ENCODE measurements at regions of chr20 and their contacts with region 1.

Region 1: DNA sequence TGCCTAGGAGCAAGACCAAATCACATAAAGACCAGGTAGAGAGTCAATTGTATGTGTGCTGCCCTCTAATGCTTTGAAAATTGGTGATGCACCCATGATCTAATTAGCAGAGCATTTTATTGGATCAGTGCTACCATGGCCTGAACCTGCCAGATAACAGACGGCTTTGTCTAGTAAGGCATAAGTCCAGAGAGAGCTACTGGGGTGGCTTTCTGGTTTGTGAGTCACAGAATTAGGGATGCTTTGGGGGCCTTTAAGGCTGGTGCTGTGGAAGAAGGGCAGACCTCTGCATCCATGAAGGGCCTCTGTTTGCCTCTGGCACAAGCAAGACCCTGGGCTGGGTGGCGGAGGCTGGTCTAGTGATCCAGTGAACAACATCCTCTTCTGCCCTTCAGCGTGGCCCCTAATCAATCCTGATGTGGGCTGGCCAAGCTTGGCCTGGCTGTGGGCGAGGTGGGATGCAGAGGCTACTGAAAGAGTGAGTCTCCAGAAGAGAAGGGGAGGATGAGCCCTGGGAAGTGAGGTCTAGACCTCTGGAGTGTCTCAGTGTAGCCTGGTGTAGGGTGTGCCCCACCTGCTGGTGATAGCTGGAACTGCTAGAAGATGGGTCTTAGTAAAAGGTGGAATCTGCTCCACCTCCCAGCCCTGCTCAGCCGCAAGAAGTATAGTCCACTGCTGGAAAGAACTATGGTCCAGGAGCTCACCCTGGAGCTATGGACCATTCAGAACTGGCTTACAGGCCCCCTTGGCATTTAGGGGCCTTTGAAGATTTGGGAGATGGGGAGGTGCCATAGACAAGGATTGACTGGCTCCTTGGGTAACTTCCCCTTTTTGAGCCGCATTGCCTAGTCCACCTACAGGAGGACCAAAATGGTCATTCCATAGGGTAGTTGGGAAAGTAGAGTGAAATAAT is 36.7 kb upstream of the AAR2 start:
- DNase-seq: peak; percentile 50 to 62 (median 58)
- H3K4me3 ChIP-seq: no peak overlapping the region
- H3K4me3 Mint-ChIP-seq: no peak overlapping the region
- H3K27ac ChIP-seq: no peak overlapping the region
- H3K27ac Mint-ChIP-seq: no peak overlapping the region
- H3K4me1 ChIP-seq: peaks cover 3% of the 10 kb centered on the region
- H3K4me1 Mint-ChIP-seq: peaks cover 3 to 6% (median 4%) of the 10 kb centered on the region in 4 donors
- H3K27me3 ChIP-seq: no peaks in the 10 kb centered on the region
- H3K27me3 Mint-ChIP-seq: peaks cover 6 to 16% of the 10 kb centered on the region in 2 donors

Region 2: GRCh38 chr20:36155991-36156390 is 43.6 kb before region 1 on chr20:
- CTCF ChIA-PET with region 1: interaction called, 16 read pairs
- POLR2A ChIA-PET with region 1: no interaction called
- intact Hi-C with region 1: loop called (anchors 1 kb)
- DNase-seq: no peak
- H3K4me3 ChIP-seq: no peak overlapping the region
- H3K4me3 Mint-ChIP-seq: peak overlapping the region in 1 of 8 donors; percentile 47
- H3K27ac ChIP-seq: no peak overlapping the region
- H3K27ac Mint-ChIP-seq: no peak overlapping the region
- H3K4me1 ChIP-seq: peaks cover 6% of the 10 kb centered on the region
- H3K4me1 Mint-ChIP-seq: peaks cover 0 to 4% (median 2%) of the 10 kb centered on the region in 4 donors
- H3K27me3 ChIP-seq: peaks cover 15% of the 10 kb centered on the region
- H3K27me3 Mint-ChIP-seq: peaks cover 14 to 30% of the 10 kb centered on the region in 2 donors

Region 3: DNA sequence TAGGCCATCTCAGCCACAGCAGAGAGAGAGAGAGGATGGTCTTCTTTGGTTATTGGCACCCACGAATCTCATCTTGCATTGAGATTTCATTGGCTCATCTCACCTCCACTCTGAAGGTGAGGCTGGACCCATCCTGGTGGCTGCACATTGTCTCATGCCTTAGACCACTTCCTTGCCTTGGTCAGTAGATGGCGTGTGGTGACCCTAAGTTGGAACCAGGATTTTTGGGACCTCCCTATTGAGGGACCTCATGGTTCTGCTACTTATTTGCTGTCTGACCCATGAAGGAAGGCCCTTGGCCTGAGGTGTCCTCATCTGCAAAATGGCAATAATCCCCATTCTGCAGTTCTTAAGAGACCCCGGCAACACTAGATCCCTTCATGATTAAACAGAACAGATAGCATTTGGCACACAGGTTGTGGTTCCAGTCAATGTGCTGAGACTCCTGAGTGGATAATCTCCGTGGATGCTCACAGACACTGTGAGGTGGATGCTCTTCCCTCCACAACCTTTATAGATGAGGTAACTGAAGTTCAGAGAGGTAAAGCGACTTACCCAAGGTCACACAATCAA is 15.2 kb after region 1 on chr20:
- CTCF ChIA-PET with region 1: interaction called, 41 read pairs
- POLR2A ChIA-PET with region 1: no interaction called
- intact Hi-C with region 1: no loop called
- DNase-seq: peak in 1 of 5 donors; percentile 10
- H3K4me3 ChIP-seq: no peak overlapping the region
- H3K4me3 Mint-ChIP-seq: no peak overlapping the region
- H3K27ac ChIP-seq: no peak overlapping the region
- H3K27ac Mint-ChIP-seq: no peak overlapping the region
- H3K4me1 ChIP-seq: no peaks in the 10 kb centered on the region
- H3K4me1 Mint-ChIP-seq: no peaks in the 10 kb centered on the region
- H3K27me3 ChIP-seq: no peaks in the 10 kb centered on the region
- H3K27me3 Mint-ChIP-seq: peaks cover 0 to 11% of the 10 kb centered on the region in 2 donors

Region 4: DNA sequence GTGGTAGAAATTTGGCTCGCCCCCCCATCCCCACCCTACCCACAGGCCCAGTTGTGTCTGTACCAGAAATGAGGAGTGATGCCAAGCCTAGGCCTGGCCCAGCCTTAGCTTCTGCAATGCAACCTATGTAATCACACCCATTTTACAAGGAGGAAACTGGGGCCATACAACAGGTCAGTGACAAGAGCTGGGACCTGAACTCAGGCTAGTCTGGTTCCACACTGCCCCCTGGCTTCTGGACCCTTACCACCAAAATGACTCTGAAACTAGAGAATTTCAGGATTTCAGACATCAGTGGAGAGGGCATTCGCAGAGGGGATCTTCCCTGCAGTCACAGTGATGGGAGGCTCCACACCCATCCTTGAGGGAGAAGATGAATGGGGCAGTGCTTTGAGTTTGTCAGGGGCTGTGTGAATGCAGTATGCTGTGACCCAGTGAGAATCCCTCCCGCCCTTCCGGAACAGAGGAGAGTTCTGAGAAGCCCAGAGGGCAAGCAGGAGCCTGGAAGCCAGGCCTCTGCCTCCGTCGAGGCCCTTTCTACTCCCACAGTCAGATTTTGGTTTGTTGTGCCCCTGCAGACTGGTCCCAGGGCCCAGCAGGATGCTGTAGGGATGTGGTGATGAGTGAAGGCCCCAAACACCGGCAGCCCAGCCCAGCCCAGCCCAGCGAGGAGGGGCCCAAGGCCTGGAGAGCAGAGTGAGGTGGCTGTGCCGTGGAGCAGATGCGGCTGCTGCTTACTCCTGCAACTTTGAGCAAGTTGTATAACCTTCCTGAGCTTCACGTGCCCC is 293.6 kb after region 1 on chr20:
- CTCF ChIA-PET with region 1: interaction called, 11 read pairs
- POLR2A ChIA-PET with region 1: no interaction called
- intact Hi-C with region 1: no loop called
- DNase-seq: no peak
- H3K4me3 ChIP-seq: no peak overlapping the region
- H3K4me3 Mint-ChIP-seq: peak overlapping the region in 1 of 8 donors; percentile 85
- H3K27ac ChIP-seq: peak overlapping the region; percentile 59
- H3K27ac Mint-ChIP-seq: peak overlapping the region in 6 of 7 donors; percentile 70 to 95 (median 92)
- H3K4me1 ChIP-seq: peaks cover 39% of the 10 kb centered on the region
- H3K4me1 Mint-ChIP-seq: peaks cover 32 to 59% (median 43%) of the 10 kb centered on the region in 4 donors
- H3K27me3 ChIP-seq: no peaks in the 10 kb centered on the region
- H3K27me3 Mint-ChIP-seq: no peaks in the 10 kb centered on the region

Region 5: GRCh38 chr20:36886859-36887751 is 687.5 kb after region 1 on chr20:
- CTCF ChIA-PET with region 1: interaction called, 3 read pairs
- POLR2A ChIA-PET with region 1: no interaction called
- intact Hi-C with region 1: loop called (anchors 2 kb)
- DNase-seq: peak; percentile 67 to 74 (median 72)
- H3K4me3 ChIP-seq: no peak overlapping the region
- H3K4me3 Mint-ChIP-seq: peak overlapping the region in 4 of 8 donors; percentile 26 to 51 (median 30)
- H3K27ac ChIP-seq: no peak overlapping the region
- H3K27ac Mint-ChIP-seq: peak overlapping the region; percentile 42 to 87 (median 81)
- H3K4me1 ChIP-seq: peaks cover 12% of the 10 kb centered on the region
- H3K4me1 Mint-ChIP-seq: peaks cover 12 to 22% (median 14%) of the 10 kb centered on the region in 4 donors
- H3K27me3 ChIP-seq: no peaks in the 10 kb centered on the region
- H3K27me3 Mint-ChIP-seq: no peaks in the 10 kb centered on the region